ENCODE measurements at regions of chr2 and their contacts with region 1.

Region 1: DNA sequence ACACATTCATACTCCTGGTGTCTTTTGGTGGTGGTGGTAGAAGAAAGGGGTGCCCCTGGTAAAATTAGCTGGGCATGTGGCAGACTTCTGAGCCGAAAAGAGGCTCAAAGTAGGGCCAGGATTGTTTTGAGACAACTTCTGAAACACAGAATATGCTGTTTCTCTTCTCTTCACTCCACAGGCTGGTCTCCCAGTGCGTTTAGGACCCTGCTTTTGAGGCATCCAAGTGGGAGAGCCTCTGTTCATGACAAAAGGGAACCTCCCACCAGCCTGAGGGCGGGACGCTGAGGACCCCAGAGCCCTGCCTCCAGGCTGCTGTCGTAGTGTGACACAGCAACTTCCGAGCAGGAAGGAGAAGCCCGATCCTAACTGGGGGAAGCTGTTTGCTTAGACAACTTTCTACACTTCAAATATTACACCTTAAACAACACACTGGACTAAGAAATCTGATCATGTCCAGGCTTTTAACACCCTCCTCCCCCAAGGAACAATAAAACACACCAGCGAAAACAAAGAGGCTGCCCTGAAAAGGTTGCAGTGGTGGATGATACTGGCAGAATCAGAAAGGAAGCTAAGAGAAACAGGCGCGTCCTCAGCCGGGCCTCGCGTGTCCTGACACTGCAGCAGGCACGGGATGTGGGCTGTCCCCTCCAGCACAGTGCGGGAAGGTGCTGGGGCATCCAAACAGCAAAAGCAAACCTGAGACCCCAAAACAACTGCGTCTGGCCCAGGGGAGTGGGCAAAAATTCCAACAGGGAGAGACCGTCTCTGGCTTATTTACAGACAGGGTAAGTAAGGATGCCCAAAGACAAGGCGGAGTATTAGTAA is 9.3 kb downstream of the SERTAD2 start:
- DNase-seq: peak; percentile 63
- H3K4me3 Mint-ChIP-seq: peak overlapping the region; percentile 82
- H3K27ac Mint-ChIP-seq: peak overlapping the region; percentile 78
- H3K4me1 Mint-ChIP-seq: peaks cover 53% of the 10 kb centered on the region
- H3K27me3 Mint-ChIP-seq: no peaks in the 10 kb centered on the region

Region 2: GRCh38 chr2:64698668-64699444 is 54.5 kb after region 1 on chr2:
- CTCF ChIA-PET with region 1: interaction called, 14 read pairs
- POLR2A ChIA-PET with region 1: no interaction called
- intact Hi-C with region 1: loop called (anchors 2 kb)
- DNase-seq: no peak
- H3K4me3 Mint-ChIP-seq: peak overlapping the region; percentile 47
- H3K27ac Mint-ChIP-seq: peak overlapping the region; percentile 72
- H3K4me1 Mint-ChIP-seq: peaks cover 41% of the 10 kb centered on the region
- H3K27me3 Mint-ChIP-seq: no peaks in the 10 kb centered on the region

Region 3: GRCh38 chr2:64730551-64731262 is 86.3 kb after region 1 on chr2:
- CTCF ChIA-PET with region 1: interaction called, 13 read pairs
- POLR2A ChIA-PET with region 1: no interaction called
- intact Hi-C with region 1: no loop called
- DNase-seq: peak; percentile 47
- H3K4me3 Mint-ChIP-seq: peak overlapping the region; percentile 80
- H3K27ac Mint-ChIP-seq: peak overlapping the region; percentile 83
- H3K4me1 Mint-ChIP-seq: peaks cover 42% of the 10 kb centered on the region
- H3K27me3 Mint-ChIP-seq: no peaks in the 10 kb centered on the region

Region 4: DNA sequence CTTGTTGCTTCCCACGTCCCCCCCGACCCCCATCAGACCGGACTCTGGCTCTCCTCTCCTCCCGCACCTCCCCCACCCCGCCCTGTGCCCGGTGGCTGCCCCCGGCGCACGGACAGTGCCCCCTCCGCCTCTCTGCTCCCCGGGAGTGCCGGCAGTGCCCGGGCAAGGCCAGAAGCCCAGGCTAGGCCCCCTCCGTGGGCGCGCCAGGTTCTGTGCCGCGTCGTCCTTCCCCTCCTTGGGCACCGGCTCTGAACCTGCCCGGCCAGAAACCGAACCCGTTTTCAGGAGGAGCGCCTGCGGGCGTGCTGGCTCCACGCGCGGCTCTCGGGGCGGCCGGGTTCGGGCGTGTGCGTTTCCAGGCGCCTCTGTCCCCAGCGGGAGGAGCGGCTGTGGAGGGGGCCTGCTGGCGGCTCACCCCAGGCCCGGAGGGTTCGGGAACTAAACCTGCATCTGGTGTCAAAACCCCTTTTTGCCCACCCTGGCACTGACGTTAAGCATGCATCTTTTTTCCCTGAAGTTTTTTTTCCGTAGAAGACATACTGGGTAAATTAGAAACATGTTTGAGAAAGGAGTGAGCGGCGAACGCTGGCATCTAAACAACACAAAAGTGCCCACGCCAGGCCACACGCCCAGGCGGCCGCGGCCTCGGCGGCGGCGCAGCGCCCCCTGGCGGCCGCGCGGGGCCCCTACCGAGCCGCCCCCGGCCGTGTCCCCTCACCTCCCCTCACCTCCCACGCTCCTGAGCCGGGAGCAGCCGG is 220.9 kb after region 1 on chr2:
- CTCF ChIA-PET with region 1: interaction called, 48 read pairs
- POLR2A ChIA-PET with region 1: interaction called, 3 read pairs
- intact Hi-C with region 1: loop called (anchors 1 kb)
- DNase-seq: peak; percentile 72
- H3K4me3 Mint-ChIP-seq: peak overlapping the region; percentile 57
- H3K27ac Mint-ChIP-seq: no peak overlapping the region
- H3K4me1 Mint-ChIP-seq: no peaks in the 10 kb centered on the region
- H3K27me3 Mint-ChIP-seq: peaks cover 5% of the 10 kb centered on the region